ENCODE measurements at regions of chr5 and their contacts with region 1.

Region 1: DNA sequence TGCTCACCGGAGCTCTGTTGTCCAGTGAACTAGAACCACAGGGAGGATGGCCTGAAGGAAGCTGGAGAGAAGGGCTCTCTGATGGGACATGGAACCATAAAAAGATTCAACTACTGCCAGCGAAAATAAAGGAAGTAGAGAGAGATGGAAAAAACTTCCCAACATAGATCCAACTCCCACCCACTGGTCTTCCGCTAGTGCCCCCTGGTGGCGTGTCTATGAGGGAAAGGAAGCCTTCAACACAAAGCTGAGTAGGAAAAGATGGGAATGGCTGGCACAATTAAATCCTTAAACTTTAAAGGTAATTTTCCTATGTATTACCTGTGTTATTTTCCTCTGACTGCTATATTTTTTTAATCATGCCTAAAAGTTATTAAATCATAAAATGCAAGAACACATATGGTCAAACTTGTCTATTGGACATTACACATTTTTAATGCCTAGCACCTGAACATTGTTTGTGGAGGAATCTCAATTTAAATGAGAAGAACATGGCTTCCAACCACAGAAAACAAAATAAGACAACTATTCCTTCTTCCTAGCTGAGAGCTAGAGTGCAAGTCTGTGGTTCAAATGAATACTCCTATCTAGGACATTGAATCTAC is 51.5 kb downstream of the CEP120 start:
- DNase-seq: no peak
- ATAC-seq: peak; percentile 70
- H3K4me3 ChIP-seq: no peak overlapping the region
- H3K27ac ChIP-seq: no peak overlapping the region
- H3K4me1 ChIP-seq: no peaks in the 10 kb centered on the region
- H3K27me3 ChIP-seq: no peaks in the 10 kb centered on the region
- CTCF ChIP-seq: peak in 2 of 3 experiments; percentile 55 to 67; a peak in 4 of 6 replicates
- POLR2A ChIP-seq: no peak
- RAD21 ChIP-seq: peak; percentile 31; the same call in 1 of the 2 replicates

Region 2: DNA sequence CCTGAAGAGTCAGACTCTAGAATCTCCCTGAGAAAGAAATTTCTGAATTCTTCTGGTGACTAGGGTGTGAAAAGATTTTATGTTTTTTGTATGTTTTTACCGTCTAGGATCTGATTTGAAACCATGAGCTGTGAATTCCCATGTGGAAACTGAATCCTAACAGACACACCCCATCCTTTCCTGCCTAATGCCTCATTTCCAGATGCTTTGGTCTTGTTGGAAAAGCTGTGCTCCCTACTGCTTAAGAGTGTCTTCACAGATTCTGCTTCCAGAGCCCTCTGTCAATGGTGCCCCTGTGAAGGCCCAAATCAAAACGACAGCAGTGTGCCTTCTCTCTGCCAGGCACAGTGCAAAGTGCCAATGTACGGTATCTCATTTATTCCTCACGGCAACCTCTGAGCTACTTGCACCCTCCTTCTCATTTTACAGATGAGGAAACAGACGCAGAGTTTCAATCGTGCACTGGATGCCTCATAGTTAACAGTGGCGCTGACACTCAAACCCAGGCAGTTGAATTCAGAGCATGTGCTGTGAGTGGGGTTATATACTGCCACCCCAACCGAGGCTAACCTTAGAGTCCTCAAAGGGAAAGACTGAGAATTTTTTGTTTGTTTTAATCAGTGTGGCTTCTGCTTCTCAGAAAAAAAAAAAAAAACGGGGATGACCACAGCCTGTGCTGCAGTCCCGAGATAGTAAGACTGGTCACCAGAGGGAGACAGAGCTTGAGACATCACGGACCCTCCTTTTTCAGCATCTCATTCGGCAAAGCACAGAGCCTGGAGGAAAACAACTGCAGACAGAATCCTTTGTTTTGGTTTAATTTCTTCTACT is 871.2 kb before region 1 on chr5:
- CTCF ChIA-PET with region 1: no interaction called
- POLR2A ChIA-PET with region 1: no interaction called
- RAD21 ChIA-PET with region 1: no interaction called
- intact Hi-C with region 1: loop called (anchors 5 kb)
- DNase-seq: peak; percentile 38
- ATAC-seq: peak; percentile 94
- H3K4me3 ChIP-seq: no peak overlapping the region
- H3K27ac ChIP-seq: no peak overlapping the region
- H3K4me1 ChIP-seq: no peaks in the 10 kb centered on the region
- H3K27me3 ChIP-seq: no peaks in the 10 kb centered on the region
- CTCF ChIP-seq: peak; percentile 37 to 66 (median 57); a peak in 5 of 6 replicates
- POLR2A ChIP-seq: no peak
- RAD21 ChIP-seq: peak; percentile 84